Mammary epithelial cell (primary cell): ENCODE measurements at regions of chr7 and their contacts with region 1.

Region 1: GRCh38 chr7:151838861-151839391 is 38.0 kb downstream of the PRKAG2 start:
- DNase-seq: no peak
- H3K4me3 ChIP-seq: no peak overlapping the region
- H3K27ac ChIP-seq: no peak overlapping the region
- H3K4me1 ChIP-seq: no peaks in the 10 kb centered on the region
- H3K27me3 ChIP-seq: peaks cover 2% of the 10 kb centered on the region
- CTCF ChIP-seq: no peak

Region 2: DNA sequence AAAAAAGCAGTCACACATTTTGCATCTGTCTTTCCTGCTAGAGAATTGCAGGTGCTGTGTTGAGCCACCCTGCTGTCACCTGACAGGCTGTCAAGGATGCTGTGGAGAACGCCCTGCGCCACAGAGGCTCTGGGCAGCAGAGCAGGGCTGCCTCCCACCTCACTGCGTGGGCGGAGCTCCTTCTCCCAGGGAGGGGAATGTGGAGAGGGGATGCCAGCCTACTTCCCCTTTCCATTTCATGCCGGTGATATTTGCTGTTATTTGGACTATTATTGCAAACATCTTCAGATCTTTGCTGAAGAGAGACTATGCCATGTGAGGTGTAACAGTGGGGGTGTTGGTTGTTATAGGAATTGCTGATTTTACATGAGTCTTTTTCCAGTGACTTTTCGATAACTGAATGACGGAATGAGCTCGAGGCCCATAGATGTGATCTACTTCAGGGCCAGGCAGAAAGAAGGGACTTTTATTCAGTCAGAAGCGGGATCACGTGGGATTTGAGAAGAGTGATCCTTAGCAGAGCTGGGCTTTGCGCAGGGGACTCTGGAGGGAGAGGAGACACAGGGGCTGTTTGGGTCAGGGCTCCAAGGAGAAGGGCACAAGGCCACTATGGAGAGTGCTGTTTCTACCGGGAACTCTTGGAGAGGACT is 51.6 kb after region 1 on chr7:
- CTCF ChIA-PET with region 1: no interaction called
- dilution Hi-C with region 1: loop called (anchors 5 kb)
- in situ Hi-C with region 1: no loop called
- intact Hi-C with region 1: no loop called
- DNase-seq: no peak
- H3K4me3 ChIP-seq: no peak overlapping the region
- H3K27ac ChIP-seq: no peak overlapping the region
- H3K4me1 ChIP-seq: peaks cover 7% of the 10 kb centered on the region
- H3K27me3 ChIP-seq: peaks cover 7% of the 10 kb centered on the region
- CTCF ChIP-seq: no peak